K562 (cell line): ENCODE measurements at regions of chr19 and their contacts with region 1.

Region 1: GRCh38 chr19:50922317-50922853 is 11.2 kb upstream of the KLK4 start:
- DNase-seq: peak; percentile 84 to 89 (median 87)
- ATAC-seq: peak; percentile 100
- H3K4me3 ChIP-seq: no peak overlapping the region
- H3K27ac ChIP-seq: no peak overlapping the region
- H3K4me1 ChIP-seq: no peaks in the 10 kb centered on the region
- H3K27me3 ChIP-seq: peaks cover 6 to 23% of the 10 kb centered on the region in 2 experiments; a peak in 3 of 5 replicates
- CTCF ChIP-seq: peak; percentile 88 to 92 (median 91)
- EP300 ChIP-seq: no peak
- POLR2A ChIP-seq: no peak
- RAD21 ChIP-seq: peak; percentile 83 to 89

Region 2: DNA sequence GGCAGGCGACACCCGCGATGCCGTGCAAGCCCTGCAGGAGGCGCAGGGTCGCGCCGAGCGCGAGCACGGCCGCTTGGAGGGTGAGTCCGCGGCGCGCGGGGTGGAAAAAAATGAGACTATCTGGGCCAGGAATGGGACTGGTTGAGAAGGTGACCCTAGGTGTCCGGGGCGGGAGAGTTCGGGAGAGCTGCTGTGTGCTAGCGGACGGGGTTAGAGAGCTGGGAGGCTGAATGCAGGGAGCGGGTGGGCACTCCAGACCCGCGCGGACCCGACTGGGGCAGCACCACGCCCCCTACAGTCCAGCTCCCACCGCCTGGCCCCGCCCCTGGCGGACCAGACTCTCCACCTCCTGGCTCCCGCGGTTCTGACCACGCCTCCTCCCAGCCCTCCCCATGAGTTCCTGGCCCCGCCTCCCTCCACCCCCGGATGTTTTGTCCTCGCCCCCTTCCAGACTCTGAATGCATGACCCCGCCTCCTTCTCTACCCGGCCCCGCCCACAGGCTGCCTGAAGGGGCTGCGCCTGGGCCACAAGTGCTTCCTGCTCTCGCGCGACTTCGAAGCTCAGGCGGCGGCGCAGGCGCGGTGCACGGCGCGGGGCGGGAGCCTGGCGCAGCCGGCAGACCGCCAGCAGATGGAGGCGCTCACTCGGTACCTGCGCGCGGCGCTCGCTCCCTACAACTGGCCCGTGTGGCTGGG is 197.7 kb before region 1 on chr19:
- CTCF ChIA-PET with region 1: interaction called, 12 read pairs
- POLR2A ChIA-PET with region 1: interaction called, 5 read pairs
- in situ Hi-C with region 1: no loop called
- intact Hi-C with region 1: no loop called
- DNase-seq: peak; percentile 98 to 100 (median 99)
- ATAC-seq: peak; percentile 86
- H3K4me3 ChIP-seq: peak overlapping the region; percentile 59
- H3K27ac ChIP-seq: peak overlapping the region; percentile 80
- H3K4me1 ChIP-seq: peaks cover 33 to 67% of the 10 kb centered on the region in 2 experiments; a peak in 4 of 5 replicates
- H3K27me3 ChIP-seq: no peaks in the 10 kb centered on the region
- CTCF ChIP-seq: peak; percentile 87 to 96 (median 91)
- EP300 ChIP-seq: no peak
- POLR2A ChIP-seq: peak; percentile 86
- RAD21 ChIP-seq: peak; percentile 82 to 83

Region 3: GRCh38 chr19:50870417-50871089 is 51.8 kb before region 1 on chr19:
- CTCF ChIA-PET with region 1: no interaction called
- POLR2A ChIA-PET with region 1: no interaction called
- in situ Hi-C with region 1: no loop called
- intact Hi-C with region 1: loop called (anchors 5 kb)
- DNase-seq: peak; percentile 93 to 94 (median 94)
- ATAC-seq: peak; percentile 99
- H3K4me3 ChIP-seq: no peak overlapping the region
- H3K27ac ChIP-seq: no peak overlapping the region; the same call in 2 of the 3 replicates
- H3K4me1 ChIP-seq: peaks cover 4 to 7% of the 10 kb centered on the region in 2 experiments; a peak in 4 of 5 replicates
- H3K27me3 ChIP-seq: peaks cover 13 to 30% of the 10 kb centered on the region in 2 experiments; a peak in 3 of 5 replicates
- CTCF ChIP-seq: peak; percentile 92 to 98 (median 98)
- EP300 ChIP-seq: peak; percentile 51; the same call in 1 of the 2 replicates
- POLR2A ChIP-seq: peak; percentile 42; the same call in 1 of the 2 replicates
- RAD21 ChIP-seq: peak; percentile 88 to 96

Region 4: GRCh38 chr19:50959731-50960500 is 37.5 kb after region 1 on chr19:
- CTCF ChIA-PET with region 1: no interaction called
- POLR2A ChIA-PET with region 1: no interaction called
- in situ Hi-C with region 1: no loop called
- intact Hi-C with region 1: no loop called
- DNase-seq: no peak
- ATAC-seq: no peak
- H3K4me3 ChIP-seq: no peak overlapping the region
- H3K27ac ChIP-seq: no peak overlapping the region
- H3K4me1 ChIP-seq: no peaks in the 10 kb centered on the region
- H3K27me3 ChIP-seq: peaks cover 4 to 29% of the 10 kb centered on the region in 2 experiments; a peak in 4 of 5 replicates
- CTCF ChIP-seq: no peak
- EP300 ChIP-seq: no peak
- POLR2A ChIP-seq: no peak
- RAD21 ChIP-seq: no peak